ENCODE measurements at regions of chr1 and their contacts with region 1.

Region 1: DNA sequence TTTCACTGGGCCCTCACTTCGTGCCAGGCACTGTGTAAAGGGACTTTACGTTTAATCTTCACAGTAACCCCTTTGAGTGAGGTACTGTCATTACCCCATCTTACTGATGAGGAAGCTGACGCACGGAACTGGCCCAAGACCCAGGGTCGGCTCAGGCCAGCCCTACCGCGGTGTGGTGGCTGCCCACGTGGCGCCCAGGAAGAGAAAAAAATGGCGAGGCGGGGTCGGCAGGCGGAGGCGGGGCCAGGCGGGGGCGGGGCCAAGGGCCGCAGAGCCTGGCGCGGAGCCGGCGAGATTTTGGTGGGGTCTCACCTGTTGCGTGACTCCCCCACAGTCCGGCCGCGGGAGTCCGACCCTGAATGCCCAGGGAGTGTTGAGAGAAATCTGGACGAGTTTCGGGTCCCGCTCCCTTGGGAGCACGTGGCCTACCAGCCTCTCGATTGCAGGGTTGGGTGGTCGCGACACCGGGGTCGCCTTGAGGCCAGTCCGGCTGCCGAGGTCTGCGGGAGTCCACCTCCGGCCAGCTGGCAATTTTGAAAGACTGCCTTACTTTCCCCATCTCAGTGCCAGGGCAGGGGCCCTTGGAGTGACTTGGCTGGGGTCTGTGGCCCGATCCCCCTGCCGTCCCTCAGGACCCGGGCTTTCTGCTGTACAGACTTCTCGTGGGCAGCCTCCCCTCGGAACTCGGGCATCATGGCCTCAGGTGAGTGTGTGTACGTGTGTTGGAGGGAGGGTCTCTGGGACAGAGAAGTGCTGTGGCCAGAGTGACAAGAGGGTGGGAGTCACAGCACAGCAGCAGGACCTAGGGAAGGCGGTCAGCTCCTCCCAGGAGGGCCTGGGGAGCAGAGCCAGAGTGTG is at the starts of genes AMPD2 and GNAT2:
- DNase-seq: peak; percentile 90
- H3K4me3 ChIP-seq: peak within 1 kb of the TSS; percentile 41 to 73 (median 59)
- H3K27ac ChIP-seq: peak within 1 kb of the TSS; percentile 75 to 83 (median 80)
- H3K4me1 ChIP-seq: peaks cover 0 to 59% (median 42%) of the 10 kb centered on the region in 4 donors
- H3K27me3 ChIP-seq: no peaks in the 10 kb centered on the region
- CTCF ChIP-seq: no peak
- EP300 ChIP-seq: no peak
- POLR2A ChIP-seq: no peak
- total RNA-seq, gene AMPD2: 19.9 to 47.5 (median 29.4) TPM
- total RNA-seq, gene GNAT2: not detected

Region 2: GRCh38 chr1:109548321-109549267 is 71.2 kb before region 1 on chr1 and contains the start of gene GNAI3:
- intact Hi-C with region 1: loop called (anchors 1 kb)
- DNase-seq: peak; percentile 98
- H3K4me3 ChIP-seq: peak within 1 kb of the TSS; percentile 72 to 94 (median 89)
- H3K27ac ChIP-seq: peak within 1 kb of the TSS; percentile 92 to 97 (median 95)
- H3K4me1 ChIP-seq: peaks cover 0 to 54% (median 40%) of the 10 kb centered on the region in 4 donors
- H3K27me3 ChIP-seq: no peaks in the 10 kb centered on the region
- CTCF ChIP-seq: no peak
- EP300 ChIP-seq: peak in 2 of 4 donors; percentile 6 to 33
- POLR2A ChIP-seq: peak; percentile 96 to 99
- total RNA-seq, gene GNAI3: 5.7 to 6.4 (median 6.1) TPM

Measured in sigmoid colon (tissue), 7 donors.